Right ventricle myocardium superior (tissue), 1 donor: ENCODE measurements at regions of chr22 and their contacts with region 1.

Region 1: GRCh38 chr22:31080848-31081649 is at the start of gene SMTN:
- DNase-seq: peak; percentile 95
- ATAC-seq: peak; percentile 85
- total RNA-seq, gene SMTN: 256 TPM

Region 2: DNA sequence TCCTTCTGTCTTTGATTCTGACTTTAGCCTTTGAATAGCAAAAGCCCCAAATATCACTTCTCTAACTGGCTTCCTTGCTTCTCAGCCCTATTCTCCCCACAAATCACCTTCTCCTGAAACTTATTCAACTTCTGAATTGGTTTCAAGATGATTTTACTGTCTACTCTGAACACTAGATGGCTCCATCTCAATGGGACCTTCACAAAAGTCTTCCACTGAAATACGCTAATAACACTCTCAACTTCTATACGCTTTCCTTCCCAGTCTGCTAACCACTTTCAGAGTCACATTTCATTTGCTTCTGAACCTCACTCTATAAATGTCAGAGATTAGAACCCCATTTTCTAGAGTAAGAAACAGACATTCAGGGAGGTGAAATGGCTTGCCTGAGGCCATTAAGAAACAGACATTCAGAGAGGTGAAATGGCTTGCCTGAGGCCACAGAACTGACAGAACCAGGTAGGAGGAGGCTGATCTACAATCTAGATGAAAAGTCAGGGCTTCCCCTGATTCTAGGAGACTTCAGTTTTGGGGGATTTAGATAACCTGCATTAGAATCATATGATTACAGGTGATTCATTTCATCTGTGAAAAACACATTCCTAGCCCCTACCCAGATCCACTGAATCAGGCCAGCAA is 133.1 kb before region 1 on chr22:
- intact Hi-C with region 1: loop called (anchors 5 kb)
- DNase-seq: no peak
- ATAC-seq: peak; percentile 79

Region 3: DNA sequence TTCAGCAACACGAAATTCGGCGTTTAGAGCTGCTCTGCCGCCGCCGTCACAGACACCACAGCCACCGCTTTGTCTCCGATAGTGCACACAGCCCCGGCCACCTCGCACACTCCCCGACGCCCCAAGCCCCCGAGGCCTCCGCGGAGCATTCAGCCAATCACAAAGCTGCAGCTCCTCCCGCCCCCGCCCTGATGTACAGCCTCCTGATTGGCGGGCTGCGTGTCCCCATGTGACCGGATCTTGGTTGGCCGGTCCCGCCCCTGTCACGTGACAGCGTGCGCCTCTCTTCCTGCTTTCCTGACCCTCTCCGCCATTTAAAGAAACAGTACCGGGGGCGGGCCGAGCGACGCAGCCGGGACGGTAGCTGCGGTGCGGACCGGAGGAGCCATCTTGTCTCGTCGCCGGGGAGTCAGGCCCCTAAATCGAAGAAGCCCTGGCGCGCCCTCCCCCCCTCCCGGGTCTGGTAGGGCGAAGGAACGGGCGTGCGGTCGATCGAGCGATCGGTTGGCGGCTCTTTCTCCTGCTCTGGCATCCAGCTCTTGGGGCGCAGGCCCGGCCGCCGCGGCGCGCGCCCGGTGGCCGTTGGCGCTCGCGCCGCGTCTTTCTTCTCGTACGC is 112.0 kb before region 1 on chr22 and contains the start of gene TUG1:
- intact Hi-C with region 1: loop called (anchors 2 kb)
- DNase-seq: peak; percentile 99
- ATAC-seq: peak; percentile 99
- total RNA-seq, gene TUG1: 30.9 TPM

Region 4: DNA sequence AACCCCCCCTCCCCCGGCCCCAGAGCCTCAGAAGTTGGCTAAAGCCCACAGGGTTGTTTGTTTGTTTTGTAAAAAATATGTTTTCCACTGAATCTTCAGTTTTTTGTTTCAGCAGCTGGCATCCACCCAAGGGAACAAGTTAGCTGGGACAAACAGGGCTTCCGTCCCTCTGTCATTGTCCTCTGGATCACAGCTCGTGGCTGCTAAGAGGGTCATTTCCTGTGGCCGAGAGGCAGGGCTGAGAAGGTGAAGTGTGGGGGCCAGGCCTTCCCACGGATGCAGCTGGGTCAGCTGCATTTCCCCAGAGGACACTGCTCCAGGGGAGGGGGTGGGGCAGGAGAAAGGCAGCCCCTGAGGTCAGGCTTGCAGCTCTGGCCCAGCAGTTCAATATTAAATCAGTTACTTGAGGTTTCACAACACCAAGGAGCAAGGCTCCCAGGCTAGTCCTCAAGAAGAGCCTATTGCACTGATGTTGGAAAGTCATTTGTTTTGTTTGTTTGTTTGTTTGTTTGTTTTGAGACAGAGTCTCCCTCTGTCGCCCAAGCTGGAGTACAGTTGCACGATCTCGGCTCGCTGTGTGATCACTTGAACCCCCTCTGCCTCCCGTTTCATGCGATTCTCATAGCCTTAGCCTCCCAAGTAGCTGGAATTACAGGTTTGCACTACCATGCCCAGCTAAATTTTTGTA is 34.4 kb before region 1 on chr22:
- intact Hi-C with region 1: loop called (anchors 5 kb)
- DNase-seq: peak; percentile 81
- ATAC-seq: peak; percentile 79

Region 5: DNA sequence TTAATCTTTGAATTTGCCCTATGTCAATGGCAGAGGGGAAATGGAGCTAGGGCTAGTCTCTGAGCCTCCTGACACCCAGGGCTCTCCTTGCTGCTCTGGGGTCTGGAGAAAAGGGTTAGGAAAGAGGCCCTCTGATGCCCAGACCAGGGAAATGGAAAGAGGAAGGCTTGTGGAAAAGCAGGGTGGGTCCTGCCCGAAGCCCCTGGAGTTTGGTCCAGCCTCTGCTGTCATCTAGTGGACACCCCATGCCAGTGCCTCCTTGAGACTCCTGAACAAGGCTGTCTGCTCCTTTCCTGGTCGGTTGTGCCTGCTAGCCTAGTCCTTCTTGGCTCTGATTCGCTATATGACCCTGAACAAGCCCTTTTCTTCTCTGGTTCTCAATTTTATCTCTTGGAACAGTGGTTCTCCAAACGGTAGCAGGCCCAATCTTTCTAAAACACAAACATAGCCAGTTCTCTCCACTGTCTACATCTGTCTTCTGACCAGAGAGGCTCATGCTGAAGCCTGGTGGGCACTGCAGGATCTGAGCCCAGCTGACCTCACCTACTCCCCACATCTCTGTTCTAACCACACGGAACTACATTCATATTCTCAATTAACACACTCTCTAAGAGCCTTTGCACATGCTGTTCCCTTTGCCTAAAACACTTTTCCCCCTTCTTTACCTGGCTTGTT is 68.0 kb after region 1 on chr22:
- intact Hi-C with region 1: loop called (anchors 5 kb)
- DNase-seq: peak; percentile 75
- ATAC-seq: peak; percentile 97